Natural killer cell (primary cell): ENCODE measurements at regions of chr13 and their contacts with region 1.

Region 1: GRCh38 chr13:46751811-46752635 is 44.9 kb downstream of the ESD start:
- DNase-seq: peak; percentile 62 to 84
- ATAC-seq: peak; percentile 94 to 97 (median 95)
- H3K4me3 ChIP-seq: no peak overlapping the region
- H3K4me3 Mint-ChIP-seq: peak overlapping the region; percentile 68
- H3K27ac ChIP-seq: peak overlapping the region; percentile 37
- H3K27ac Mint-ChIP-seq: peak overlapping the region; percentile 65 to 76
- H3K4me1 ChIP-seq: peaks cover 27% of the 10 kb centered on the region
- H3K4me1 Mint-ChIP-seq: peaks cover 47 to 52% of the 10 kb centered on the region in 2 donors
- H3K27me3 ChIP-seq: peaks cover 4% of the 10 kb centered on the region
- H3K27me3 Mint-ChIP-seq: peaks cover 11 to 15% of the 10 kb centered on the region in 2 donors
- CTCF ChIP-seq: no peak

Region 2: DNA sequence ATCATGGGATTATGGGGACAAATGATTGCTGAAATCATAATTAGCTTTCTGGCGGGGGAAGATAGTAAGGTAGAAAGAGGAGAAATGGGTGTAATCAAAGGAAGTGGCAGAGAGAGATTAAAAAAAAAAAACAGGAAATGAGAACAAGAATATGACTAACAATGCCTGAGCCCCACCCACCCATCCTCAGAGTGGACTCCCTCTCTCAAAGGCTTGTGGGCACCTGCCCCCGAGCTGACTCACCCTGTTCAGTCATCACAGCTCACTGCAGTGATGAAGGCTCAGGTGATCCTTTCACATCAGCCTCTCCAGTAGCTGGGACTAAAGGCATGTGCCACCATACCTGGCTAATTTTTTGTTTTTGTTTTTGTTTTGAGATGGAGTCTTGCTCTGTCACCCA is 1384.7 kb before region 1 on chr13:
- intact Hi-C with region 1: no loop called
- DNase-seq: peak; percentile 61 to 92
- ATAC-seq: peak; percentile 96 to 97 (median 96)
- H3K4me3 ChIP-seq: no peak overlapping the region
- H3K4me3 Mint-ChIP-seq: peak overlapping the region; percentile 75
- H3K27ac ChIP-seq: peak overlapping the region; percentile 36
- H3K27ac Mint-ChIP-seq: peak overlapping the region; percentile 60 to 73
- H3K4me1 ChIP-seq: peaks cover 34% of the 10 kb centered on the region
- H3K4me1 Mint-ChIP-seq: peaks cover 34 to 50% of the 10 kb centered on the region in 2 donors
- H3K27me3 ChIP-seq: no peaks in the 10 kb centered on the region
- H3K27me3 Mint-ChIP-seq: no peaks in the 10 kb centered on the region
- CTCF ChIP-seq: no peak

Region 3: GRCh38 chr13:46668302-46668720 is 83.7 kb before region 1 on chr13:
- intact Hi-C with region 1: loop called (anchors 5 kb)
- DNase-seq: peak in 1 of 2 donors; percentile 30
- ATAC-seq: peak; percentile 30 to 46 (median 38)
- H3K4me3 ChIP-seq: peak overlapping the region; percentile 50
- H3K4me3 Mint-ChIP-seq: peak overlapping the region; percentile 91
- H3K27ac ChIP-seq: peak overlapping the region; percentile 96
- H3K27ac Mint-ChIP-seq: peak overlapping the region; percentile 91 to 95
- H3K4me1 ChIP-seq: peaks cover 22% of the 10 kb centered on the region
- H3K4me1 Mint-ChIP-seq: peaks cover 48 to 57% of the 10 kb centered on the region in 2 donors
- H3K27me3 ChIP-seq: no peaks in the 10 kb centered on the region
- H3K27me3 Mint-ChIP-seq: no peaks in the 10 kb centered on the region
- CTCF ChIP-seq: no peak

Region 4: DNA sequence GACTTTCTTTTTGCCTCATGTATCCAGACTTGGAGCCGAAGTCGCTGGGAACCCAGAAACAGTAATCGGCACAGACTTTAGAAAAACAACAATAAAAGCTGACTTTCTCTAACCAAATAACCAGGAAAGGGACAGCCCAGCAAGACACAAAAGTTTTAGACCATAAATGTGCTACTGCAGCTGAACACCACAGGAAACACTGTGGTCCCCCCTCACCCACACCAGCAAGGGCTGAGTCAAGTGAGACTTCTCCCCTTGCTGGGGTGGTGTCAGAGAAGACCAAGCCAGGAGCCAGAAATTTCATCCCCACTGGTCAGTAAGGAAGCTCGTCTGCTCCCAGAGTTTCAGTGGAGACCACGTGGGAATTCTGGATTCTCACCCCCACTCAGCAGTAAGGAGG is 25.7 kb before region 1 on chr13:
- intact Hi-C with region 1: loop called (anchors 1 kb)
- DNase-seq: peak; percentile 14 to 55
- ATAC-seq: peak; percentile 84 to 99 (median 92)
- H3K4me3 ChIP-seq: no peak overlapping the region
- H3K4me3 Mint-ChIP-seq: peak overlapping the region; percentile 83
- H3K27ac ChIP-seq: no peak overlapping the region
- H3K27ac Mint-ChIP-seq: peak overlapping the region; percentile 63 to 66
- H3K4me1 ChIP-seq: peaks cover 23% of the 10 kb centered on the region
- H3K4me1 Mint-ChIP-seq: peaks cover 34 to 41% of the 10 kb centered on the region in 2 donors
- H3K27me3 ChIP-seq: no peaks in the 10 kb centered on the region
- H3K27me3 Mint-ChIP-seq: peaks cover 0 to 5% of the 10 kb centered on the region in 2 donors
- CTCF ChIP-seq: no peak

Region 5: GRCh38 chr13:46796515-46797474 is 44.8 kb after region 1 on chr13 and contains the start of gene ESD:
- intact Hi-C with region 1: loop called (anchors 5 kb)
- DNase-seq: peak; percentile 73 to 90
- ATAC-seq: peak; percentile 89 to 93 (median 92)
- H3K4me3 ChIP-seq: peak within 1 kb of the TSS; percentile 89
- H3K4me3 Mint-ChIP-seq: peak within 1 kb of the TSS; percentile 96
- H3K27ac ChIP-seq: peak within 1 kb of the TSS; percentile 75
- H3K27ac Mint-ChIP-seq: peak within 1 kb of the TSS; percentile 84 to 93
- H3K4me1 ChIP-seq: peaks cover 16% of the 10 kb centered on the region
- H3K4me1 Mint-ChIP-seq: peaks cover 15 to 18% of the 10 kb centered on the region in 2 donors
- H3K27me3 ChIP-seq: no peaks in the 10 kb centered on the region
- H3K27me3 Mint-ChIP-seq: peaks cover 0 to 5% of the 10 kb centered on the region in 2 donors
- CTCF ChIP-seq: no peak
- total RNA-seq, gene ESD: 12.9 to 18.5 (median 14.3) TPM

Region 6: GRCh38 chr13:46810440-46810839 is 58.4 kb after region 1 on chr13:
- intact Hi-C with region 1: no loop called
- DNase-seq: no peak
- ATAC-seq: no peak
- H3K4me3 ChIP-seq: no peak overlapping the region
- H3K4me3 Mint-ChIP-seq: no peak overlapping the region
- H3K27ac ChIP-seq: no peak overlapping the region
- H3K27ac Mint-ChIP-seq: no peak overlapping the region
- H3K4me1 ChIP-seq: no peaks in the 10 kb centered on the region
- H3K4me1 Mint-ChIP-seq: no peaks in the 10 kb centered on the region
- H3K27me3 ChIP-seq: peaks cover 3% of the 10 kb centered on the region
- H3K27me3 Mint-ChIP-seq: peaks cover 6 to 50% of the 10 kb centered on the region in 2 donors
- CTCF ChIP-seq: no peak

Region 7: DNA sequence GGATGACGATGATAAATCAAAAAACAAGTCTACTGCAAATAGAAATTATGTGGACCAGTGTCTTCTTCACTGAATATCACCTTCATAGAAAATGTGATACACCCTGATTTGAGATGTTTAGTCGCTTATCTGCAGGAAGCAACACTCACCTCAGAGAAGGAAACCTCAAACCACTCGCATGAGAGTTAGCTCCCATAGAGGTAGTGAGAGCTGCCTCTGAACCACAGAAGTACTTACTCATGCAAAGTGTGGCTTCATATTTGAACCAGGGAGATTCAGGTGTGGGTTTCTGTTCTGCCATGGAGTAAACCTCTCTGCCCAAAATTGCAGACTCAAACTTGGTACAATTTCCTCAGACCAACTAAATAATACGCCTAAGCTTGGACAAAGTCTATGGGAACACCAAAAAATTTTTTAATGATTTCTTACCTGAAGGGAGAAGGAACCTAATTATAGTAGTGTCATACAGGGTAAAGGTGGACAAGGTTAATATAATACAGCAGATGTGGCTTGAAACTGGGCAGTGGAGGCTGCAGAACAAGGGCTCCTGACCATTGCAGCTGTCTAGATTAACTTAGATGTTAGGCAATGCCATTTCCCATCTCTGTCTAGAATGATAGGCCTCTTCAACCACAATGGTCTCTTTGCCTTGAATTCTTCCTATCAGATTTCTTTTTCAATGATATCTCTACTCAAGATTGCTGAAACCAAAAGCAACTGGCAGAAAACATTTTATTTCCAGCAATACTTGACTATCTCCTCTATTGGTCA is 1810.5 kb after region 1 on chr13:
- intact Hi-C with region 1: loop called (anchors 5 kb)
- DNase-seq: peak; percentile 33 to 92
- ATAC-seq: peak; percentile 85 to 99 (median 98)
- H3K4me3 ChIP-seq: no peak overlapping the region
- H3K4me3 Mint-ChIP-seq: peak overlapping the region; percentile 80
- H3K27ac ChIP-seq: peak overlapping the region; percentile 42
- H3K27ac Mint-ChIP-seq: peak overlapping the region; percentile 52 to 68
- H3K4me1 ChIP-seq: peaks cover 16% of the 10 kb centered on the region
- H3K4me1 Mint-ChIP-seq: peaks cover 54 to 61% of the 10 kb centered on the region in 2 donors
- H3K27me3 ChIP-seq: no peaks in the 10 kb centered on the region
- H3K27me3 Mint-ChIP-seq: peaks cover 6 to 25% of the 10 kb centered on the region in 2 donors
- CTCF ChIP-seq: no peak